ENCODE measurements at regions of chr11 and their contacts with region 1.

Region 1: GRCh38 chr11:120792306-120792705 is 231.6 kb upstream of the TBCEL start:
- DNase-seq: no peak
- H3K4me3 ChIP-seq: no peak overlapping the region
- CTCF ChIP-seq: no peak

Region 2: DNA sequence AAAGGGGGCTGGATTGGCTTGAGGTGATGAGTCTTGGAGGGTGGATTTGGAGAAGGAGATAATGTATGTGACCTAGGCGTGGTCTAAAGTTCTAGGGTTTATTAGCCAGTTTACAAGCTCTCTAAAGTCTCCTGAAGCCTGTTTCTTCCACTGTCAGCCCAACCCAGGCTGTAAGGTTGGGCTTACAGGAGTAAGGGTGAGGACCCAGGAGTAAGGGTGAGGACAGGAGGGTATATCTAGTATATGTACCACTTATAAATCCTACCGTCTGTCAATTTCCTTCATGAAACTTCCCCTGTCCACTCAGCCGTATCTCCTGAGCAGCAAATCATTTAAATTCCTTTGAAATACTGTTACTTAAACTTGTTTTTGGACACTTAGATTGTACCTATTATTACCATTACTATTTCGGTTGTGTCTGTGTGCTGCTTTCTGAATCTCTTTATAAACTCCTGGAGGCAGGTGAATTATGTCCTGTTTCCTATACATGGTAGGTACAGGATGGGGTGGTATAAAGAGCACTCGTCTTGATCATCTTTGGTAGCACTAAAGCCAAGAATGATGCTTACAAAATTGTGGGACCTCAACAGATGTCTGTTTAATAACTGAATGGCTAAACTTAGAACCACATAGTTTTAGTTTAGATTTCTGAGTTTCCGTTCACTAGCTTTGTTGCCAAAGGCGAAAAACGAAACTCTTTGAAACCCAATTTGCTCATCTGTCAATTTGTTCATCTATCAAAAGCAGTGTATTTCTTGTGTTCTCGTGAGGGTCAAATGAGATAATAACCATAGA is 88.8 kb before region 1 on chr11:
- in situ Hi-C with region 1: no loop called
- DNase-seq: no peak
- H3K4me3 ChIP-seq: no peak overlapping the region
- CTCF ChIP-seq: no peak

Region 3: DNA sequence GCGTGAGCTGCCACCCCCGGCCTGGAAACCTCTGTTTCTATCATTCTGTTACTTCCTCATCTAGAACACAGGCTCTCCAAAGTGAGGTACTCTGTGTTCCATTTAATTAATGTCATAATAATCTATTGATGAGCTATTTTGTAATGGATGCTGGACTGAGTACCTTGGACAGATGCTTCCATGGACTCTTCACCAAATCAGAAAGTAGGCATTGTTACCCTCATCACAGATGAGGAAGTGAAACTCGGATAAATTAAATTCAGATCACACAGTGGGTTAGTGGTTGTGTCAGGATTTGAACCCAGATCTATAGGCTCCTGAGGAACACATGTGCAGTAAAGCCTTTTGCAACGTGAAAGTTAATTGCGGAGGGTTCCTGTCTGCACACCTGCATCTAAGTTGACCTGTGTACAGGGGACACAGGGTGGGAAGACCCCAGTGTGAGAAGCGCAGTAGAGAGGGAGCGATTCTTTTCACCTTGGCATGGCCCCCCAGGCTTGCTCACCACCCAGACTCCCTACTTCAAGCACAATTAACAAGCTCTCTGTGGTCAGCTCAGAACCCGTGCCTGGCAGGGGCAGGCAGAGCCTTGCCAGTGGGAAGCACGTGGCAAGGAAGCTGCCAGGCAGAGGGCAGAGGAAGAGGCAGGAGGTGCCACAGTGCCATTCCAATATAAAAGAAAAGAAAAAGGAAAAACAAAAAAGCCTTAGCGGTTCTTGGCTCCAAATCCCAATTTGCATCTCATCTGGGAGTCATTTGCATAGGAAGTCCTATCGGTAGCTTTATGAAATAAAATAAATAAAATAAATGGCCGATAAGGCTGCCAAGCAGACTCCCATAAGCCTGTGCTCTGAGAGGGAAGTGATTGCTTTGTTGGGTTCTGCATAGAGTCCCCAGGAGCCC is 41.4 kb before region 1 on chr11:
- in situ Hi-C with region 1: loop called (anchors 5 kb)
- DNase-seq: no peak
- H3K4me3 ChIP-seq: no peak overlapping the region
- CTCF ChIP-seq: no peak

Region 4: DNA sequence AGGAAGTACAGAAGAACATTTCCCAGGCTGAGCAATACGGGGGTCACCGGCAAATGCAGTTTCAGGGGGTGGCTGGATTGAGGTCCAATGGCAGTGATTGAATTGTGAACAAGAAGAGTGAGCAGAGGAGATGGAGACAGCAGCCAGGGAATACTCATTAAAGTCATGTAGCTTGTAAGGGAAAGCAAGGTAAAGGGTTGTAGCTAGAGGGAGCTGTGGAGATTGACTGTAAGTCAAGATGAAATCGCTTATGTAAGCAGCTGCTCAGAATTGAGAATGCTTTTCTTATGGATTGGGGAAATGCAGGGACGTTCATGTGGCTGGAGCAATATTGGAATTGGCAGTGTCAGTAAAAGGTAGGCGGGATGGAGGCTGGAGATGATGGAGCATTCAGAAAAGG is 120.2 kb after region 1 on chr11:
- in situ Hi-C with region 1: no loop called
- DNase-seq: peak; percentile 12
- H3K4me3 ChIP-seq: no peak overlapping the region
- CTCF ChIP-seq: peak; percentile 36

Measured in astrocyte of the cerebellum (primary cell).